ENCODE measurements at regions of chr7 and their contacts with region 1.

Region 1: GRCh38 chr7:3300651-3301378 is at the start of gene SDK1:
- DNase-seq: peak; percentile 99
- H3K4me3 Mint-ChIP-seq: peak within 1 kb of the TSS; percentile 75
- H3K27ac Mint-ChIP-seq: peak within 1 kb of the TSS; percentile 70
- H3K4me1 Mint-ChIP-seq: peaks cover 19% of the 10 kb centered on the region
- H3K27me3 Mint-ChIP-seq: no peaks in the 10 kb centered on the region
- CTCF ChIP-seq: peak; percentile 94
- total RNA-seq, gene SDK1: 19.7 and 20.0 TPM in 2 replicates

Region 2: DNA sequence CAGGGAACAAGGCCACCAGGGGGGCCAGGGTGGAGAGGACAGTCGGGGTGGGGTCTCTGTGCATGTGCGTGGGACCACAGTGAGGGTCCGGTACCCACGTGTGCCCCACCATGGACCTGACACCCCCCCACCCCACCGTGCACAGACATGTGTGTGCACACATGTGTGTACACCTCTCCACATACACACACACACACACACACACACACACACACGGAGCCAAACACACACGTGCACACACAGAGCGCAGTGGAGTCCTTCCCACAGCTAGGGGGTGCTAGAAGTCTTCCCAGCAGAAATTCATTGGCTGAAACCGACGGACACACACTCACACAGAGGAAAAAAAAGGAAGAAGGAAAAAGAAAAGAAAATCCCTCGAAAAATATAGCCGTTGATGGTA is 413.9 kb before region 1 on chr7:
- CTCF ChIA-PET with region 1: interaction called, 7 read pairs
- intact Hi-C with region 1: loop called (anchors 10 kb)
- DNase-seq: peak; percentile 85
- H3K4me3 Mint-ChIP-seq: peak overlapping the region; percentile 36
- H3K27ac Mint-ChIP-seq: peak overlapping the region; percentile 11
- H3K4me1 Mint-ChIP-seq: peaks cover 18% of the 10 kb centered on the region
- H3K27me3 Mint-ChIP-seq: no peaks in the 10 kb centered on the region
- CTCF ChIP-seq: peak; percentile 93

Region 3: GRCh38 chr7:3264693-3265339 is 36.0 kb before region 1 on chr7:
- CTCF ChIA-PET with region 1: no interaction called
- intact Hi-C with region 1: no loop called
- DNase-seq: no peak
- H3K4me3 Mint-ChIP-seq: no peak overlapping the region
- H3K27ac Mint-ChIP-seq: no peak overlapping the region
- H3K4me1 Mint-ChIP-seq: no peaks in the 10 kb centered on the region
- H3K27me3 Mint-ChIP-seq: peaks cover 30% of the 10 kb centered on the region
- CTCF ChIP-seq: no peak

Region 4: GRCh38 chr7:3345699-3346481 is 45.1 kb after region 1 on chr7:
- CTCF ChIA-PET with region 1: no interaction called
- intact Hi-C with region 1: no loop called
- DNase-seq: no peak
- H3K4me3 Mint-ChIP-seq: no peak overlapping the region
- H3K27ac Mint-ChIP-seq: no peak overlapping the region
- H3K4me1 Mint-ChIP-seq: no peaks in the 10 kb centered on the region
- H3K27me3 Mint-ChIP-seq: no peaks in the 10 kb centered on the region
- CTCF ChIP-seq: no peak

Region 5: DNA sequence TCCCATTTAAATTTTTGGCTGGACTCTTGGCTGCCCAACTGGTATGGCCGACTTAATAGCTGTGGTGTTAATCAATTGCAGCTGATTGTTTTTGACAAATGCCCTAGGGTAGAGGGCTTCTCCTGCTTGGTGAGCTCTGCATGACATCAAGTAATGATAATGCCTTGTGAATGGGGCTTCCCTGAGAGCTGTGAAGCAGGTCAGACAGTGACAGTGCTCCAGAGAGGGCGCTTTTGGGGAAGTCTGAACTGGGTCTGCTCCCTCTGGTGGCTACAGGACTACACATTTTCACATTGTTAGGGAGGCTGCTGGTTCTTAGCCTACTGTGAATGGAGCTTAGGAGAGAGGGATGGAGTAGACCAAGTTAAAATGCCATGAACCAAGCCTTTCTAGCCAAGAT is 99.0 kb after region 1 on chr7:
- CTCF ChIA-PET with region 1: interaction called, 4 read pairs
- intact Hi-C with region 1: loop called (anchors 5 kb)
- DNase-seq: peak; percentile 39
- H3K4me3 Mint-ChIP-seq: no peak overlapping the region
- H3K27ac Mint-ChIP-seq: no peak overlapping the region
- H3K4me1 Mint-ChIP-seq: peaks cover 19% of the 10 kb centered on the region
- H3K27me3 Mint-ChIP-seq: no peaks in the 10 kb centered on the region
- CTCF ChIP-seq: peak; percentile 47

Region 6: DNA sequence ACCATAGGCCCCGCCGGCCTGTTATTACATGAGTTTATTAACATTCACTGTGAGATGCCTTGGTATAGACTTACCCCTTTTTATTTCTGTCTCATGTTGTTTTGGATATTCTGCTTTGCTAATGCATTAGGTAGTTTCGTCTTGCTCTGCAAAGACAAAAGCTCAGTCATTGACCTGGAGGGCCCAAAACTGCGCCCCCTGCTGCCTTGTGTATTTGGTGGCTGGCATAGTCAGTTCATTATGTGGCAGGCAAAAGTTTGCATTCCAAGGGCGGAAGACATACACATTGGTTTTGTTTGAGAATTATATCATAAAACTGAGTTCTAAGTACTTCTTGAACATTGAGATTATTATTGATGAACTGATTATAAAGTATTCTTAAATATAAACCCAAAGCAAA is 372.7 kb after region 1 on chr7:
- CTCF ChIA-PET with region 1: interaction called, 3 read pairs
- intact Hi-C with region 1: loop called (anchors 10 kb)
- DNase-seq: peak; percentile 66
- H3K4me3 Mint-ChIP-seq: no peak overlapping the region
- H3K27ac Mint-ChIP-seq: no peak overlapping the region
- H3K4me1 Mint-ChIP-seq: no peaks in the 10 kb centered on the region
- H3K27me3 Mint-ChIP-seq: no peaks in the 10 kb centered on the region
- CTCF ChIP-seq: peak; percentile 39

Region 7: GRCh38 chr7:3897438-3898385 is 596.9 kb after region 1 on chr7:
- CTCF ChIA-PET with region 1: no interaction called
- intact Hi-C with region 1: loop called (anchors 1 kb)
- DNase-seq: peak; percentile 63
- H3K4me3 Mint-ChIP-seq: no peak overlapping the region
- H3K27ac Mint-ChIP-seq: no peak overlapping the region
- H3K4me1 Mint-ChIP-seq: peaks cover 31% of the 10 kb centered on the region
- H3K27me3 Mint-ChIP-seq: no peaks in the 10 kb centered on the region
- CTCF ChIP-seq: peak; percentile 85